ENCODE measurements at regions of chr9 and their contacts with region 1.

Region 1: DNA sequence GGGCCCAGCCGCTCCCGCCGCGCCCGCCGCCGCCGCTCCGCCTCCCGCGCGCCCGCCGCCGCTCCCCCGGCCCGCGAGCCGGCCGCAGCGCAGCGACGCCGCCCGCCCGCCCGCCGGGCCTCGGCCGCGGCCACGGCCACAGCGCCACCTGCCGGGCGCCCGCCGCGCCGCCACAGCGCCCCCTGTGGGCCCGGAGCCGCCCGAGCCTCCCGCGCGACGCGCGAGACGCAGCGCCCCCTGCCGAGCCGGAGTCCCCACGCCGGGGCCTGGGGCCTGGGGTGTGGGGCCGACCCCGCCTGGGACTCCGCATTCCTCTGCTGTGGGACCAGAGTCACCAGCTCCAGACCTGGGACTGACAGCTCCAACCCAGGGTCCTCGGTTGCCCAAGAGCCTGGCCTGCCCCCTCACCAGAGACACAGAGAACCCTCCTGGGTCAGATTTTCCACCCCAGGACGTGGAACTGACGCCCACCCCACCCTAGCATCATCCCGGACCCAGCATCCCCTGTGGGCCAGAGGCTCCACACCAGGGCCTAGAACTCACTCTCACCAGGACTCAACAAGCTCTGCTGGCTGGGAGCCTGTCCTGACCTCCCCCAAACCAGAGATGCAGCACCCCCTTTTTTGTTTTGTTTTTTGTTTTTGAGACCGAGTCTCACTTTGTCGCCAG is at the start of gene RAPGEF1:
- DNase-seq: peak; percentile 72 to 92 (median 78)
- ATAC-seq: peak; percentile 54 to 82 (median 68)
- H3K4me3 ChIP-seq: peak within 1 kb of the TSS; percentile 29 to 93 (median 72)
- H3K27ac ChIP-seq: peak within 1 kb of the TSS; percentile 80 to 96 (median 88)
- H3K4me1 ChIP-seq: peaks cover 3 to 55% (median 37%) of the 10 kb centered on the region in 12 donors
- H3K27me3 ChIP-seq: no peaks in the 10 kb centered on the region
- CTCF ChIP-seq: peak; percentile 69 to 96 (median 87)
- POLR2A ChIP-seq: no peak
- total RNA-seq, gene RAPGEF1: 81.9 to 161 (median 116) TPM

Region 2: DNA sequence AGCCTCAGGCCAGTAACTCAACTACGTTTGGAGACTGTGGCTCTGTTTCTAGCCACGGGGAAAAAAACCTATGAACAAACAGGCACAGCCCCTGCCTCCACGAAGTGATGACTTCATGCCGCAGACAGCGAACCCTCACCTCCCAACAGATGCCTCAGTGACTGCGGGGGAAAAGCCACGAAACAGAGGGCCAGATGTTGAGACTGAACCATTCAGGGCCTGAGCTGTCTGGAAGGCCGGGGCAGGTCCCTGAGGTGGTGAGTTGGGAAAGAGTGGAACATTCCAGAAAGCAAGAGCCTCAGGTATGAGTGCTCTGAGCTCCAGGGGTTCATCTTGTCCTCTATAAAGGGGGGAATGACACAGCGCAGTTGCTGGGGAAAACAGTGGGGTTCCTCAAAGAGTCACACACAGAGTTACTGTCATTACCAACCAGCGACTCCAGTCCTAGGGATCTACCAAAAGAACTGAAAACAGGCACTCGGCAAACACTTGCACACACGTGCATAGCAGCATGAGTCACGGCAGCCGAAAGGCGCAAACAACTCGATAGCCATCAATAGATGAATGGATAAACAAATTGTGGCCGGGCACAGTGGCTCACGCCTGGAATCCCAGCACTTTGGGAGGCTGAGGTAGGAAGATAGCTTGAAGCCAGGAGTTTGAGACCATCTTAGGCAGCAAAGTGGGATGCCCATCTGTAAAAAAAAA is 435.3 kb before region 1 on chr9:
- intact Hi-C with region 1: no loop called
- DNase-seq: no peak
- ATAC-seq: no peak
- H3K4me3 ChIP-seq: no peak overlapping the region
- H3K27ac ChIP-seq: peak overlapping the region in 4 of 12 donors; percentile 17 to 95 (median 70)
- H3K4me1 ChIP-seq: peaks cover 0 to 44% (median 13%) of the 10 kb centered on the region in 12 donors
- H3K27me3 ChIP-seq: no peaks in the 10 kb centered on the region
- CTCF ChIP-seq: no peak
- POLR2A ChIP-seq: no peak

Region 3: GRCh38 chr9:131366761-131367401 is 373.2 kb before region 1 on chr9:
- intact Hi-C with region 1: loop called in 2 of 10 experiments (anchors 10 kb)
- DNase-seq: peak in 3 of 5 donors; percentile 39 to 55 (median 49)
- ATAC-seq: peak; percentile 72 to 80 (median 78)
- H3K4me3 ChIP-seq: no peak overlapping the region
- H3K27ac ChIP-seq: no peak overlapping the region
- H3K4me1 ChIP-seq: peaks cover 0 to 19% (median 4%) of the 10 kb centered on the region in 12 donors
- H3K27me3 ChIP-seq: no peaks in the 10 kb centered on the region
- CTCF ChIP-seq: peak in 10 of 12 donors; percentile 20 to 59 (median 52)
- POLR2A ChIP-seq: no peak

Region 4: GRCh38 chr9:131530920-131531832 is 208.9 kb before region 1 on chr9 and contains the start of gene UCK1:
- intact Hi-C with region 1: loop called in 4 of 10 experiments (anchors 2 to 10 kb)
- DNase-seq: peak; percentile 82 to 93 (median 85)
- ATAC-seq: peak; percentile 86 to 98 (median 98)
- H3K4me3 ChIP-seq: peak within 1 kb of the TSS; percentile 71 to 100 (median 96)
- H3K27ac ChIP-seq: peak within 1 kb of the TSS; percentile 20 to 96 (median 86)
- H3K4me1 ChIP-seq: peaks cover 3 to 20% (median 11%) of the 10 kb centered on the region in 12 donors
- H3K27me3 ChIP-seq: no peaks in the 10 kb centered on the region
- CTCF ChIP-seq: peak in 4 of 12 donors; percentile 1 to 22 (median 4)
- POLR2A ChIP-seq: peak in 1 of 2 donors; percentile 77
- total RNA-seq, gene UCK1: 16.4 to 45.1 (median 24.9) TPM

Region 5: DNA sequence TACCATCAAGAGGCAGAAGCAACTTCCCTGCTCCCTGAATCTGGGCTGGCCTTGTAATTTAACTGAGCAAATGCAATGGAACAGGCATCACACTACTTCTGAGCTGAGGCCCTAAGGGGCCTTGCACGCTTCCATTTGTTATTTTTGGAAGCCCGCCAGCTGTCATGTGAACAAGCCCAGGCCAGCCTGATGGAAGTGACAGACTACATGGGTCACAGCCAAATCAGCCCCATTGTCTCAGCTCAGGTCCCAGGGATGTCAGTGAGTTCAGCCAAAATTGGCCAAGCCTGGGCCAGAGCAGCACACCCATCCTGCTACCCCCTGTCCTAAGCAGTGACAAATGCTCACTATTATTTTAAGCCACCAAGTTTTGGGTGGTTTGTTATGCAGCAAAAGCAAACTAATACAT is 122.0 kb before region 1 on chr9:
- intact Hi-C with region 1: loop called in 2 of 10 experiments (anchors 5 to 10 kb)
- DNase-seq: peak; percentile 76 to 91 (median 89)
- ATAC-seq: peak; percentile 83 to 96 (median 92)
- H3K4me3 ChIP-seq: no peak overlapping the region
- H3K27ac ChIP-seq: peak overlapping the region in 9 of 12 donors; percentile 11 to 74 (median 63)
- H3K4me1 ChIP-seq: peaks cover 0 to 37% (median 15%) of the 10 kb centered on the region in 12 donors
- H3K27me3 ChIP-seq: no peaks in the 10 kb centered on the region
- CTCF ChIP-seq: no peak
- POLR2A ChIP-seq: peak in 1 of 2 donors; percentile 17

Region 6: DNA sequence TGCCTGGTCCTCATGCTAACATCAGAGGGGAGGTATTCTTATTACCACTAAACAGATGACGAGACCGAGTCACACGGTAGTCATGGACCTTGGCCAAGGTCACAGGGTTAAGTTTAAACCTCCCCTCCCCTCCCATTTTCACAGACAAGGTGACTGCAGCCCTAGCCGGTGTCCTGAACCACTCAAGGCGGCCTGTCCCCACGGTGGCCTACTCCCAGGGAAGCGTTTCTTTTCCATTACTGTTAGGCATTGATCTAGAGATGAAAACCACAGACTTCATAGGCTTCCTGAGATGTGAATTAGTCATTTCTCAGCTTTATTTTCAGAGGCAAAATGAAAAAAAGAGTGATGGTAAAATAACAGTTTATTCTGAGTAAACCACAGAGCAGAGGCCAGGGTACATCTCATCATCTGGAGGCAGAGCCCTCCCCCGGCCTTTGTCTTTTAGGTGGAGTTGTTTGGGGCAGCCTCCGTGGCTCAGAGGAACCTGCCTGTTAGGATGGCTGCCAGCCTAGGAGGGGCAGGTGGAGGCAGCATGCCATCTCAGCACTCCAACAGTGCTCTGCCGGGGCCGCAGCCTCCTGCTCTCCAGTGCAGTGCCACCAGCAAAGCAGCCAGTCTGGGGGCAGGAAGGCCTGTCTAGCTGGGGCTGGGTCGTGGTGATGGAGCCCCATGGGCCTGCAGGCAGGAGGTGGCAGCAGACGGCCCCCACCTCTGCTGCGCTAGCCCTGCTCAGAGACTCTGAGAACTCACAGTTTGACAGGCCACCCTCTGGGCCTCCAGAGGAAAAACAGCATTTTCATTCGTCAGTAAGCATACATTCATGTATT is 71.5 kb before region 1 on chr9:
- intact Hi-C with region 1: loop called in 6 of 10 experiments (anchors 5 to 10 kb)
- DNase-seq: peak in 2 of 5 donors; percentile 47 to 49
- ATAC-seq: peak in 3 of 4 donors; percentile 14 to 27 (median 23)
- H3K4me3 ChIP-seq: peak overlapping the region in 1 of 12 donors; percentile 7
- H3K27ac ChIP-seq: peak overlapping the region; percentile 51 to 94 (median 86)
- H3K4me1 ChIP-seq: peaks cover 15 to 88% (median 76%) of the 10 kb centered on the region in 12 donors
- H3K27me3 ChIP-seq: no peaks in the 10 kb centered on the region
- CTCF ChIP-seq: no peak
- POLR2A ChIP-seq: peak in 1 of 2 donors; percentile 31

Region 7: DNA sequence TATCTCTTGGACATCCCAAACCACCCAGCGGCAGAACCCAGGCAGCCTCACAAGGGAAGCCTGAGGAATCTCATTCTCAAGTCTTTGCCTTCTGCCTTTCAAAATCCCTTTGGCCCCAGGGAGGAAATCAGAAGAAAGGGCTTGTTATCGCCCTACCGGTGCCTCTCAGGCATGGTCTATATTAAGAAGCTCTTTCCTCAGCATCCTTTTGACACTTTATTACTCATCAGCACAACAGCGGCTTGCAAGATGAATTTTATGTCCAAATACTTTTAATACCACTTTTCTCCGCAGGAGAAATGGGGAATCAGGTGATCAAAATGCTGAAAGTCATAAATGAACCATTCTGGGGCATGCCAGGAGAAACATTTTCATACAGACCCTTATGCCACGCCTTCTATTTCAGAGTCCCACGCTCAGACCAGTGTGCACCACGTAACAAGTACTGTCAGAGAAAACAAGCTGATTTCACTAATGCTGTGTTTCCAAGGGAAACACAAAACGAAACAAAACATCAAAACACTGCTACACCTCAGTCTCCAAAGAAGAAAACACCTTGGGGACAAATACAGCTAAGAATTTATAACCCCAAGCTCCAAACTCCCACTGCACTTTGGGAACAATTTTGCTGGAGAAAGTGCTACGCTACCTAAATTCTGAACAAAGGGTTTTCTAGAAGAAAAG is 30.2 kb before region 1 on chr9:
- intact Hi-C with region 1: loop called in 1 of 10 experiments (anchors 2 kb)
- DNase-seq: no peak
- ATAC-seq: peak in 3 of 4 donors; percentile 7 to 23 (median 8)
- H3K4me3 ChIP-seq: peak overlapping the region in 11 of 12 donors; percentile 13 to 61 (median 46)
- H3K27ac ChIP-seq: peak overlapping the region; percentile 58 to 93 (median 81)
- H3K4me1 ChIP-seq: peaks cover 4 to 99% (median 56%) of the 10 kb centered on the region in 12 donors
- H3K27me3 ChIP-seq: no peaks in the 10 kb centered on the region
- CTCF ChIP-seq: peak in 1 of 12 donors; percentile 8
- POLR2A ChIP-seq: peak in 1 of 2 donors; percentile 52

Measured in heart left ventricle (tissue), 16 donors.